ENCODE measurements at regions of chrX and their contacts with region 1.

Region 1: GRCh38 chrX:8748855-8749254 is 16.9 kb upstream of the ANOS1 start:
- DNase-seq: no peak
- H3K4me3 Mint-ChIP-seq: no peak overlapping the region
- H3K27ac Mint-ChIP-seq: no peak overlapping the region
- H3K4me1 Mint-ChIP-seq: no peaks in the 10 kb centered on the region
- H3K27me3 Mint-ChIP-seq: peaks cover 1% of the 10 kb centered on the region

Region 2: DNA sequence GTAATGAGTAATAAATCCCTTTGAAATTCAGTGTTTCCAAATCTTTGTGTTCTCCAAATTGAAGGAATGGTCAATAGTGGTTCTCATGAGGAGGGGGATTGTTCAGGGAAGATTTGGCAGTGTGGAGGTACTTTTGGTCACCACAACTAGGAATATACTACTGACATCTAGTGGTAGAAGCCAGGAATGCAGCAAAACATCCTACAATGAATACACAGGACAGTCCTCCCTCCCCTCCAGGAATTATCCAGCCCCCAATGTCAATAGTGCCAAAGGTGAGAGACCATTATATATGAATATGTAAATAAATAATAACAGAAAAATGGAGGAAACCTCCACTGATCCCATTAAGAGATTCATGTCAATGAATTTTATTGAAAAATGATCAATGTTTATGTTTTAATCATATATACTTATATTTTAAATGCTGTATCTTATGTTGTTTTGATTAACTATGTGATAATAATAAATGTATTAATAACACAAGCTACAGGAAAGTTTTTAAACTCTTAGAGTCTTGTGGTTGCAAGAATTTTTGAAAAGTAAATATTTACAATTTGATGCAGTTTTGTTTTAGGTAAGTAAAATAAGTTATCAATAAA is 66.7 kb after region 1 on chrX:
- CTCF ChIA-PET with region 1: no interaction called
- POLR2A ChIA-PET with region 1: no interaction called
- intact Hi-C with region 1: loop called (anchors 2 kb)
- DNase-seq: no peak
- H3K4me3 Mint-ChIP-seq: no peak overlapping the region
- H3K27ac Mint-ChIP-seq: no peak overlapping the region
- H3K4me1 Mint-ChIP-seq: no peaks in the 10 kb centered on the region
- H3K27me3 Mint-ChIP-seq: peaks cover 2% of the 10 kb centered on the region

Region 3: GRCh38 chrX:9403374-9403773 is 654.5 kb after region 1 on chrX:
- CTCF ChIA-PET with region 1: no interaction called
- POLR2A ChIA-PET with region 1: no interaction called
- intact Hi-C with region 1: no loop called
- DNase-seq: no peak
- H3K4me3 Mint-ChIP-seq: no peak overlapping the region
- H3K27ac Mint-ChIP-seq: no peak overlapping the region
- H3K4me1 Mint-ChIP-seq: no peaks in the 10 kb centered on the region
- H3K27me3 Mint-ChIP-seq: no peaks in the 10 kb centered on the region